ENCODE measurements at regions of chr15 and their contacts with region 1.

Region 1: GRCh38 chr15:81410318-81410753 is 36.3 kb upstream of the TMC3 start:
- DNase-seq: peak; percentile 36 to 73
- ATAC-seq: peak; percentile 76 to 87
- H3K4me3 ChIP-seq: no peak overlapping the region
- H3K27ac ChIP-seq: no peak overlapping the region
- H3K4me1 ChIP-seq: no peaks in the 10 kb centered on the region
- CTCF ChIP-seq: peak; percentile 66
- EP300 ChIP-seq: no peak
- POLR2A ChIP-seq: no peak
- RAD21 ChIP-seq: peak; percentile 73 to 78

Region 2: GRCh38 chr15:81301815-81302399 is 108.4 kb before region 1 on chr15:
- CTCF ChIA-PET with region 1: interaction called, 10 read pairs
- POLR2A ChIA-PET with region 1: no interaction called
- DNase-seq: no peak
- ATAC-seq: no peak
- H3K4me3 ChIP-seq: no peak overlapping the region
- H3K27ac ChIP-seq: no peak overlapping the region
- H3K4me1 ChIP-seq: peaks cover 13% of the 10 kb centered on the region
- CTCF ChIP-seq: no peak
- EP300 ChIP-seq: no peak
- POLR2A ChIP-seq: no peak
- RAD21 ChIP-seq: no peak

Region 3: GRCh38 chr15:81336568-81336967 is 73.8 kb before region 1 on chr15:
- CTCF ChIA-PET with region 1: interaction called, 11 read pairs
- POLR2A ChIA-PET with region 1: no interaction called
- DNase-seq: peak; percentile 21 to 36
- ATAC-seq: peak; percentile 35 to 76; a peak in 3 of 6 replicates
- H3K4me3 ChIP-seq: no peak overlapping the region
- H3K27ac ChIP-seq: no peak overlapping the region
- H3K4me1 ChIP-seq: peaks cover 13% of the 10 kb centered on the region; the same call in 2 of the 3 replicates
- CTCF ChIP-seq: peak; percentile 33; the same call in 1 of the 3 replicates
- EP300 ChIP-seq: no peak
- POLR2A ChIP-seq: no peak
- RAD21 ChIP-seq: peak; percentile 32 to 66; a peak in 2 of 5 replicates

Region 4: DNA sequence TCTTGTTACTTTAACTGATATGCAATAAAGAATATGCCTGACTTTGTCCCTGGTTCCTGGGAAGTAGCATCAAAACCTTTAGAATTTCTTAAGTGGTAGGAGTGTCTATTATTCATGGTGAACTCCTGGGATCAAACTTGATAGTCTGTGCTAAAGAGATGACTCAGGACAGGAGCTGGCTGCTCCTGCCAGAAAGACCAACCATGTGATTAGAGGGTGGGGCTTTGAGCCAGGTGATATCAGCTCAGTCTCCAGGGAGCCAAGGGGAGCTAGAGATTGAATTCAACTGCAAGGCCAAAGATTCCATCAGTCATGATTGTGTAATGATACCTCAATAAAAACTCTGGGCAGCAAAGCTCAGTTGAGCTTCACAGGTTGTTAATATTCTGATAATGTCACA is 15.7 kb before region 1 on chr15:
- CTCF ChIA-PET with region 1: interaction called, 44 read pairs
- POLR2A ChIA-PET with region 1: no interaction called
- DNase-seq: no peak
- ATAC-seq: no peak
- H3K4me3 ChIP-seq: no peak overlapping the region
- H3K27ac ChIP-seq: no peak overlapping the region
- H3K4me1 ChIP-seq: no peaks in the 10 kb centered on the region
- CTCF ChIP-seq: no peak
- EP300 ChIP-seq: no peak
- POLR2A ChIP-seq: no peak
- RAD21 ChIP-seq: no peak

Region 5: GRCh38 chr15:82197733-82198594 is 787.6 kb after region 1 on chr15:
- CTCF ChIA-PET with region 1: interaction called, 10 read pairs
- POLR2A ChIA-PET with region 1: no interaction called
- DNase-seq: peak; percentile 67 to 75
- ATAC-seq: peak; percentile 95 to 99
- H3K4me3 ChIP-seq: no peak overlapping the region
- H3K27ac ChIP-seq: no peak overlapping the region
- H3K4me1 ChIP-seq: no peaks in the 10 kb centered on the region
- CTCF ChIP-seq: peak; percentile 90
- EP300 ChIP-seq: no peak
- POLR2A ChIP-seq: no peak
- RAD21 ChIP-seq: peak; percentile 91